Activated B cell treated with CpG ODN at 0.5 μM for 24 hours (primary cell): ENCODE measurements at regions of chr9 and their contacts with region 1.

Region 1: GRCh38 chr9:131762356-131762932 is 22.6 kb upstream of the RAPGEF1 start:
- DNase-seq: peak; percentile 79
- ATAC-seq: peak; percentile 98
- H3K4me3 Mint-ChIP-seq: no peak overlapping the region
- H3K27ac Mint-ChIP-seq: no peak overlapping the region
- H3K4me1 Mint-ChIP-seq: no peaks in the 10 kb centered on the region
- H3K27me3 Mint-ChIP-seq: peaks cover 15% of the 10 kb centered on the region
- CTCF ChIP-seq: peak; percentile 66

Region 2: GRCh38 chr9:131738293-131739132 is 23.9 kb before region 1 on chr9:
- CTCF ChIA-PET with region 1: no interaction called
- POLR2A ChIA-PET with region 1: no interaction called
- intact Hi-C with region 1: no loop called
- DNase-seq: no peak
- ATAC-seq: no peak
- H3K4me3 Mint-ChIP-seq: peak overlapping the region; percentile 93
- H3K27ac Mint-ChIP-seq: peak overlapping the region; percentile 78
- H3K4me1 Mint-ChIP-seq: peaks cover 63% of the 10 kb centered on the region
- H3K27me3 Mint-ChIP-seq: no peaks in the 10 kb centered on the region
- CTCF ChIP-seq: no peak

Region 3: GRCh38 chr9:132268725-132269352 is 506.4 kb after region 1 on chr9:
- CTCF ChIA-PET with region 1: interaction called, 12 read pairs
- POLR2A ChIA-PET with region 1: no interaction called
- intact Hi-C with region 1: loop called (anchors 1 kb)
- DNase-seq: peak; percentile 48
- ATAC-seq: peak; percentile 57
- H3K4me3 Mint-ChIP-seq: no peak overlapping the region
- H3K27ac Mint-ChIP-seq: peak overlapping the region; percentile 63
- H3K4me1 Mint-ChIP-seq: peaks cover 3% of the 10 kb centered on the region
- H3K27me3 Mint-ChIP-seq: no peaks in the 10 kb centered on the region
- CTCF ChIP-seq: peak; percentile 99